A673 (cell line): ENCODE measurements at regions of chr5 and their contacts with region 1.

Region 1: DNA sequence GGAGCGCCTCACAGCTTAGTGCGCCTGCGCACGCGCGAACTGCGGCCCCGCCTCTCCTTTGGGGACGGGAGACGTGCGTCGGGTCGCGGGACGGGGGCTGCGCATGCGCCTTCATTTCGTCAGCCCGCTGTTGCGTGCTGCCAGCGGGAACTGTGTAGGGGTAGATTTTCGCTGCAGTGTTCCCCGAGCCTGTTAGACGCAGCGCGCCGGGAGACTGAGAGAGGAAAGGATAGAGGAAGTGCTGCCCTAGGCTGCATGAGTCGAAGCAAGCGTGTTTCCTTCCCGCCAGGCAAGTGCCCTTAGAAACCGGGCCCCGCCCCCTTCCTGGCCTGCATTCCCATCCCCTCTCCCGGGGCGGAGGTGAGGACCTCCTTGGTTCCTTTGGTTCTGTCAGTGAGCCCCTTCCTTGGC is 12.3 kb downstream of the ITGA1 start:
- DNase-seq: peak; percentile 98
- H3K4me3 ChIP-seq: peak overlapping the region; percentile 59
- H3K27ac ChIP-seq: peak overlapping the region; percentile 92
- H3K4me1 ChIP-seq: peaks cover 23% of the 10 kb centered on the region
- H3K27me3 ChIP-seq: no peaks in the 10 kb centered on the region
- CTCF ChIP-seq: no peak

Region 2: DNA sequence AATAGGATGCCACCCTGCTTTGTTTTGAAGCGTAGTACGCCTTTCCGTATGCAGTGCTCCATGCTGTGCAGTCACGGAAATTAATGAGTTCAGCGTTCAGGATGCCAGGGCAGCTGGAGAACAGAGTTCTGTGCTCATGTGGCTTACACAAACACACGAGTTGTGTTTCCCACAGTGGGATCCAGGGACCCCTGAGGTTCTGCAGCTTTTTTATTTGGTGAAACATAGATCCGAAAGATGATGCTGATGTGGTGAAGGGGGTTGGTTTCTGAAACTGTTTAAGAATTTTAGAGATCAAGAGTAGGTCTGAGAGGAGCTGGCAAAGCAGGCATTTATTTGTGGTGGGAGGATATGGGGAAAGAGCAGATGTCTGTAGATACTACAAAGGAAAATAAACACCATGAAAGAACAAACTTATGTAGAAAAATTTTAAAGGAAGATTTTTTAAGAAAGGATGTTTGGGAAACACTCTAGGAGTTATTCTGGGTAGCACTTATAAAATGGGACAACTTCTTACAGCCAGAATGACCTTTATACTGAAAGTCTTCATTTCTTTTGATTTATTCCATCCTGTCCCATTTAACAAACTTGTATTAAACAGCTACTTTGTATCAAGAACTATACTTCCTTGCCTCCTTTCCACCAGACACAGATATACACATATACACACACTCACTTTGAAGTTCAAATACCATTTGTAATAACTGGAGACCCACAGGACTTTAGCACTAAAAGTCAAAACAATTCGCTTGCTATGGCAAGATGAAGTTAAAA is 40.5 kb after region 1 on chr5:
- CTCF ChIA-PET with region 1: no interaction called
- POLR2A ChIA-PET with region 1: no interaction called
- intact Hi-C with region 1: loop called (anchors 2 kb)
- DNase-seq: peak; percentile 88
- H3K4me3 ChIP-seq: peak overlapping the region; percentile 2
- H3K27ac ChIP-seq: peak overlapping the region; percentile 69
- H3K4me1 ChIP-seq: peaks cover 51% of the 10 kb centered on the region
- H3K27me3 ChIP-seq: no peaks in the 10 kb centered on the region
- CTCF ChIP-seq: no peak